Vagina (tissue), 2 donors: ENCODE measurements at regions of chr9 and their contacts with region 1.

Region 1: DNA sequence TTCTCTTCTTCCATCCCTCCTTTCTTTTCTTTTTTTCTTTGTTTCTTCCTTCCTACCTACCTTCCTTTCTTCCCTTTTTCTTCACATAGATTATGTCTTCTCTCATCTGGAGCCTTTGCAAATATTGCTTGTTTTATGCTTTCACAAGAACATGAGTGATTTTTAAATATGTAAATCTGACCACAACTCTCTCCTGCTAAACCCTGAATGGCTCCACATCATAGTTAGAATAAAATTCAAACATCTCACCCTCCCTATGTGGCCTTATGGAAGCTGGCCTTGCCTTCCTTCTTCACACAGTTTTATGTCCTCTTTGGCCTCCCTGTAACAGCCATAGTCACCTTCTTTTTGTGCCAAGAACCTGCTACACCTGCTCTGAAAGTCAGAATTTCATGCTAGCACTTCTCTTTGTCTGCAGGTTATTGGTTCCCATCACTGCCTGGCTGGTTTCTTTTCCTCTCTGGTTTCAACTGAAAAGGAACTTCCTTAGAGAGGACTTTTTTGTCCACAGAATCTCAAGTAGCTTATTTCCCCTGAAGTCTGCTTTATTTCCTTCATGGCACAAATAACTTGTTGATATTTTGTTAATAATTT is 114.3 kb upstream of the TNC start:
- DNase-seq: no peak
- H3K4me3 ChIP-seq: no peak overlapping the region
- H3K27ac ChIP-seq: no peak overlapping the region
- H3K4me1 ChIP-seq: peaks cover 13% of the 10 kb centered on the region
- H3K27me3 ChIP-seq: no peaks in the 10 kb centered on the region
- CTCF ChIP-seq: no peak
- POLR2A ChIP-seq: no peak

Region 2: DNA sequence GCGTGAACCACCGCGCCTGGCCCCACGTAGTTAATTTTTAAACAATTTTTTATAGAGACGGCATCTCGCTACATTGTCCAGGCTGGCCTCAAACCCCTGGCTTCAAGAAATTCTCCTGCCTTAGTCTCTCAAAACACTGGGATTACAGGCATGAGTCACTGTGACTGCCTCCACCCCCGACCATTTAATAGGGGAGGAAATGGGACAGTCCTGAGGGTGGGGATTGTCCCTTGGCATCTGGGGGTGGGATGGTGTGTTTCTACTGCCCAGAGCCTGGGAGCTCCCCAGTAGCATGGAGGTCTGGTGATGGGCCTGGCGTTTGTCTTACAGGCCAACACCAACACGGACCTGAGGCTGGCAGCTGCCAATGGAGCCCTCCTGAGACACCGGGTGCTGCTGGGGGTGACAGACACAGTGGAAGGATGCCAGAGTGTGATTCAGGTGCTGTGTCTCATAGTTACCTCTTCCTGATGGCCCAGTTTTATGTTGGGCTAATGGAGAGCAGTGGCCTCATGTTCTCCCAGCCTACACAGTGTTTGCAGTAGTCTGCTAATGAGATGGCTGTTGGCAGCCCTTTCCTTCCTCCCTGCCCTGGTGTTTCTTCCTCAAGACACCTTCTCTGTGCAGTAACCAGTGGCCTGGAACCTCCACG is 598.7 kb before region 1 on chr9:
- intact Hi-C with region 1: no loop called
- DNase-seq: no peak
- H3K4me3 ChIP-seq: no peak overlapping the region
- H3K27ac ChIP-seq: no peak overlapping the region
- H3K4me1 ChIP-seq: no peaks in the 10 kb centered on the region
- H3K27me3 ChIP-seq: no peaks in the 10 kb centered on the region
- CTCF ChIP-seq: no peak
- POLR2A ChIP-seq: no peak

Region 3: DNA sequence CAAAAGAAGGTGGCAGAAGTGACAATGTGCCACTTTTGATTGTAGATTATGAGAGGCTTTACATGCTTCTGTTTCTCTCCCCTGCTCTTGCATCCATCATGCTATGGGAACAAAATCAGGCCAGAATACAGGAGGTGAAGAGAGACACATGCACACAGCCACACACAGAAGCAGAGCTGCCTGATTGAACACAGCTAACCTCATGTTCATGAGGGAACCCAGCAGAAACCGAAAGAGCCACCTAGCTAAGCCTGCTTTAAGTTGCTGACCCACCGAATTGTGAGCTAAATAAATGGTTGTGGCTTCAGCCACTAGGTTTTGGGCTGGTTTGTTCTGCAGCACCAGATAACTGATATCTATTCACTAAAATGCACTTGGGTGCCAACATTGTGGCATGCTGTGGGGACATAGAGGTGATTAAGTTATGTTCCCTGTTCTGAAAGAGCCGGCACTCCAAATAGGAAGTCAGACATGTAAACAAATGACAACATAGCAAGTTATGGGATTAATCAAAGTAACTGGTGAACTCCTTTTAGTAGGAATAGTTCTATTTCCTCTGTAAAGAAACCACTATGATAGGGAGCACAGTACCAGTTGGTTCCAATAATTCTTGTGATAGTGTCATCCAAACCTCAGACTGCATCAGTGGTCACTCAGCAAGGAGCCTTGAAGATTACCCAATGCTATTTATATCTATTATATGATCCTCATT is 20.7 kb before region 1 on chr9:
- intact Hi-C with region 1: loop called (anchors 2 kb)
- DNase-seq: no peak
- H3K4me3 ChIP-seq: no peak overlapping the region
- H3K27ac ChIP-seq: peak overlapping the region; percentile 4
- H3K4me1 ChIP-seq: peaks cover 16% of the 10 kb centered on the region
- H3K27me3 ChIP-seq: no peaks in the 10 kb centered on the region
- CTCF ChIP-seq: no peak
- POLR2A ChIP-seq: no peak